Activated naive CD4-positive, alpha-beta T cell treated with anti-CD3 and anti-CD28 coated beads for 36 hours (primary cell): ENCODE measurements at regions of chr3 and their contacts with region 1.

Region 1: GRCh38 chr3:188914552-188914951 is 257.2 kb upstream of the TPRG1 start:
- DNase-seq: peak; percentile 36
- H3K4me3 Mint-ChIP-seq: no peak overlapping the region
- H3K27ac Mint-ChIP-seq: peak overlapping the region; percentile 85
- H3K4me1 Mint-ChIP-seq: peaks cover 47% of the 10 kb centered on the region
- H3K27me3 Mint-ChIP-seq: peaks cover 2% of the 10 kb centered on the region

Region 2: DNA sequence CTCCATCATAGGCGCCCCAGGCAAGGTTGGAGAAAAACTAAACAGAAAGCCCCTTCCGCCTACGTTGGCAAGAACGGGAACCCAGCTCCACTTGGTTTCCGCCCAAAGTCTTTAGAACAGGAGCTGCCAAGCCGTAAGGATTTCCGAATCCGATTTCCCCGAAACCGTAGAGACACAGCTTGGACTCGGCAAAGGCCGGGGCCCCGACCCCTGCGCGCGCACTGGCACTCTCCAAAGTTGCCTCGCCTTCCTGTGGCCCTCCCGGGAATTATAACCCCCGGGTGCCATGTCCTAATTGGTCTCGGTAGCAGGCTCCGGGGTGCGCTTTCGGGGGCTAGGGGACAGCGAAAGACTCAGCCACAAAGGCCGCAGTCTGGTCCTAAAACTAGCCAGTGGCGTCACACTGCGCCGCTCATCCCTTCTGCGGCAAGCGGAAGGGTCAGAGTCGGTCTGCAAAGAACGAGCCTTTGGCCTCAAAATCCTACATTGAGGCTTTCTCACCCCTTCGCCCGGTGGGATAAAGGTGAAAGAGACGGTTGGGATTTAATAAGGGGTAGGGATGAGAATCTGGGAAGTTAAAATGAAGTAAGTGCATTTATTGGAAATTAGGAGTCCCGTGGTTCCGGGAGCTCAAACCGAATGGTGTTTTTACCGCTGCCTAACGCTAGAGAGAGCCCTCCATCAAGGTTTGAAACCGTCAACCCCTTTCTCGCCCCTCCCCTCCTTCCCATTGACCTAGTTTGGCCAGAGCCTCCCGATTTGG is 1176.0 kb before region 1 on chr3:
- CTCF ChIA-PET with region 1: interaction called, 6 read pairs
- intact Hi-C with region 1: loop called (anchors 2 kb)
- DNase-seq: peak; percentile 85
- H3K4me3 Mint-ChIP-seq: peak overlapping the region; percentile 86
- H3K27ac Mint-ChIP-seq: peak overlapping the region; percentile 97
- H3K4me1 Mint-ChIP-seq: peaks cover 35% of the 10 kb centered on the region
- H3K27me3 Mint-ChIP-seq: no peaks in the 10 kb centered on the region

Region 3: DNA sequence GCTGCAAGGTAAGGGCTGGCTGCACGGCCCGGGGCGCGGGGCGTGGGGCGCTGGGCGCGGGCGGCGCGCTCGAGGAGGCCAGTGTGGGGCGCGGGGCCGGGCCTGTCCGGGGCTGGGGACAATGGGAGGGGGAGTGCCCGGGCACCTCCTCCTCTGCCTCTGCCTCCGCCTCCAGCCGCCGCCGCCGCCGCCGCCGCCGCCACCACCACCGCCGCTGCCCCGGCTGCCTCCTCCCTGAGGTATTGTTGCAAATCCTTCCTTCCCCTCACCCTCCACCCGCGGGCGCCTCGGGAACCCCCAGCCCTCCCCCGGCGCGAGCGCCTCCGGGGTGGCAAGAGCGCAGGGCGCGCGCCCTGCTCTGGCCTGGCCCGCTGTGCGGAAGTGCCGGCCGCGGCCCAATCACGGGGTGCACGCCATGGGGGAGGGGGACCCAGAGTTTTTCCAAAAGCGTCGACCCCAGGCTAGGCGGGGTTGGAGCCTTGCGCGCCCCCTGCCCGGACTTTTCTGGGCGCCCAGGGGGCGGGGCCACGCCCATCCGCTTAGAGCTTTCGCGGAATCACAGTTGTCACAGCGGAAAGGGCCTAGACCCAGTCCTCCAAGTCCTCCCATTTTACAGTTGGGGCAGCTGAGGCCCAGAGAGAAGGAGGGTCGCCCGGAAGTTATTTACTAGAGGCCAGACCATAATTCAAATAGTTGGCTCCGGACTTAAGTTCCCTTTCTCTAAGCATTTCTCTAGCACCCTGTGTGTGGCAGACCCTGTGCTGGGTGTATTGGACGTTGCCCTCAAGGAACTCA is 760.3 kb before region 1 on chr3 and contains the start of gene LPP:
- CTCF ChIA-PET with region 1: no interaction called
- intact Hi-C with region 1: loop called (anchors 2 kb)
- DNase-seq: peak; percentile 88
- H3K4me3 Mint-ChIP-seq: peak within 1 kb of the TSS; percentile 83
- H3K27ac Mint-ChIP-seq: peak within 1 kb of the TSS; percentile 89
- H3K4me1 Mint-ChIP-seq: peaks cover 54% of the 10 kb centered on the region
- H3K27me3 Mint-ChIP-seq: no peaks in the 10 kb centered on the region
- total RNA-seq, gene LPP: 27.5 to 31.8 TPM

Region 4: GRCh38 chr3:188320757-188321156 is 593.8 kb before region 1 on chr3:
- CTCF ChIA-PET with region 1: interaction called, 3 read pairs
- intact Hi-C with region 1: loop called (anchors 1 kb)
- DNase-seq: no peak
- H3K4me3 Mint-ChIP-seq: no peak overlapping the region
- H3K27ac Mint-ChIP-seq: no peak overlapping the region
- H3K4me1 Mint-ChIP-seq: peaks cover 49% of the 10 kb centered on the region
- H3K27me3 Mint-ChIP-seq: no peaks in the 10 kb centered on the region

Region 5: GRCh38 chr3:188683032-188683521 is 231.5 kb before region 1 on chr3:
- CTCF ChIA-PET with region 1: no interaction called
- intact Hi-C with region 1: loop called (anchors 1 kb)
- DNase-seq: peak; percentile 51
- H3K4me3 Mint-ChIP-seq: no peak overlapping the region
- H3K27ac Mint-ChIP-seq: peak overlapping the region; percentile 37
- H3K4me1 Mint-ChIP-seq: peaks cover 32% of the 10 kb centered on the region
- H3K27me3 Mint-ChIP-seq: no peaks in the 10 kb centered on the region

Region 6: DNA sequence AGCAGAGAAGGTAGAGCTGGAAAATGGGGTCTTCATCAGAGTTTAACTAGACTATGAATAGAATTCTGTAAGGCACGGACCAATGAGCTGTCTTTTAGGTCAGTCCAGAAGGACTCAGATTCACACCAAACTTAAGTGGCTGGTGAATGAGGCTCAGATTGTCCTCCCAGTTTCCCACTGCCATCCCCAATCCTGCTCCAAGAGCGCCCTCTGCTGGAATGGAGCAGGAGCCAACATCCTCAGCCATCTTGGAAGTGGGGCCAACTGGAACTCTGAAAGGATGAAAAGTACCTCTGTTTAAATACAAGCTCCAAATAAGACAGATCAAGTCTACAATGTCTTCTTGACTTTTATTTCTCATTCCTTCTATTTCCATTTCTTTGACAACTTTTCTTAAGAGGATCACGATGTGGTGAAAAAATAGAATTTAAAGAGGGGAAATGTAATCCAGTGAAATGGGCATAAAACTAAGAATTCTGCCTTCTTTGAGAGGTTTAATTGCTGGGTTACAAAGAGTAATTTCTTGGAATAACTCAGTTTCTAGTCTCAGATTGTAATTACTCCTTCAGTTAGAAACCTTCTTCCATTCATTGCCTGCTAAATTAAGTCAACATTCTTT is 40.1 kb after region 1 on chr3:
- CTCF ChIA-PET with region 1: interaction called, 22 read pairs
- intact Hi-C with region 1: loop called (anchors 1 kb)
- DNase-seq: peak; percentile 91
- H3K4me3 Mint-ChIP-seq: no peak overlapping the region
- H3K27ac Mint-ChIP-seq: no peak overlapping the region
- H3K4me1 Mint-ChIP-seq: peaks cover 39% of the 10 kb centered on the region
- H3K27me3 Mint-ChIP-seq: no peaks in the 10 kb centered on the region

Region 7: DNA sequence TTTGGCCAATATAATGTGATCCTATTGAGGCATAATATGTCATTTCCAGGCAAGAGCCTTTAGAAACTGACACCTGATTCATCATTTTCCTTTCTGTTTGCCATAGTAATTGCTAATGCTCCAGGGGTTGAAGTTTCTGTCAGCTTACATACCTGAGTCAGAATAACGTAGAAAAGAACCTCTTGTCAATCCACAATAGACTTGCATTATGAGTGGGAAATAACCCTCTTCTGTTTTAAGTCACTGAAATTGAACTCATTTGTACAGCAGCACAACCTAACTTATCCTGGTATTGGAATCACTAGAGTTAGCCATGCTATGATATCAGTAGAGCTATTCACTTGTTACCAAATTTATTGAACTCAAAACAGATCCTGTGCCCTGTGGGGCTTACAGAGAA is 614.9 kb after region 1 on chr3:
- CTCF ChIA-PET with region 1: no interaction called
- intact Hi-C with region 1: loop called (anchors 1 kb)
- DNase-seq: no peak
- H3K4me3 Mint-ChIP-seq: no peak overlapping the region
- H3K27ac Mint-ChIP-seq: peak overlapping the region; percentile 74
- H3K4me1 Mint-ChIP-seq: peaks cover 46% of the 10 kb centered on the region
- H3K27me3 Mint-ChIP-seq: no peaks in the 10 kb centered on the region